ENCODE measurements at regions of chr20 and their contacts with region 1.

Region 1: DNA sequence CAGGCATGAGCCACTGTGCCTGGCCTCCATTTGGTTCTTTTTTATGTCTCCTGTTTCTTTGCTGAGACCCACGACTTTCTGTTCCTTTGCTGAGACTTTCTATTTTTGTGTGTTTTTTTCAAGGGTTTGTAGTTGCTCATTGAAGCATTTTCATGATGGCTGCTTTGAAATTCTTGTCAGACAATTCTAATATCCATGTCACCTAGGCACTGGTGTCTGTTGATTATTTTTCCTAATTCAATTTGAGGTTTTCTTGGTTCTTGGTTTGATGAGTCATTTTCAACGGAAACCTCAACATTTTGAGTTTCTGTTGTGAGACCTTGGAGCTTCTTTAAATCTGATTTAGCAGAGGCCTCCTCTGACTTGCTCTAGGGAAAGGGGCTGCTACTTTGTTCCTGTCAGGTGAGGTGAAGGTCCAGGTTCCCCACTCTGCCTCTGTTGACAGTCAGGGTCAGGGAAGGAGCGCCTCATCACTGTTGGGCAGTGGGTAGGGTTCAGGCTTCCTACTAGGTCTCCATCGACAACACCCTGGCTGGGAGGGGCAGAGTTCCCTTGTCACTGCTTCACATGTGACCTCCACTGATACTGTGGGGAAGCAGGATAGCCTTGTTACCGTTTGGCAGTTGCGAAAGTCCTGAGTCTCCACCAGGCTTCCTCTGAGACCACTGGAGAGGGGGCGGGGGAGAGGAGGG is 67.2 kb upstream of the RNF24 start:
- DNase-seq: peak; percentile 24 to 60
- ATAC-seq: no peak

Region 2: GRCh38 chr20:3888622-3889488 is 193.7 kb before region 1 on chr20 and contains the start of gene PANK2:
- intact Hi-C with region 1: loop called in 1 of 2 experiments (anchors 10 kb)
- DNase-seq: peak; percentile 98 to 99
- ATAC-seq: peak; percentile 95
- total RNA-seq, gene PANK2: 26.9 to 28.8 TPM

Region 3: DNA sequence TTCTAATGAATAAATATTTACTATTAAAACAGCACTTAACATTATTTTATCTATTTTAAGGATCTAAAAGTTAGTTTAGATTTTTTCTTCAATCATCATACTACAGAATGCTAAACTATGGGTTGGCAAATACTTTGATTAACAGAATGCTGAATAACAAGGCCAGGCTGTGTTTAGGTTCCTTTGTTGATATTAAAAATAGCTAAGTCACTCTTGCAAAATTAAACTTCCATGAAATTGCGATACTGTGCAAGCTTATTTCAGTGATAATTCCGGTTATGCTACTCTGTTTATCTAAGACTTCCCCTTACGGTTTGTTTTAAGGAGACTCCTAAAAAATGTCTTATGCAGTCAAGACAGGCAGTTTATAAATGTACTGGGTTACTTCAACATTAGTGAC is 70.0 kb before region 1 on chr20:
- intact Hi-C with region 1: loop called in 1 of 2 experiments (anchors 2 kb)
- DNase-seq: no peak
- ATAC-seq: no peak